GM12878 (cell line): ENCODE measurements at regions of chr12 and their contacts with region 1.

Region 1: DNA sequence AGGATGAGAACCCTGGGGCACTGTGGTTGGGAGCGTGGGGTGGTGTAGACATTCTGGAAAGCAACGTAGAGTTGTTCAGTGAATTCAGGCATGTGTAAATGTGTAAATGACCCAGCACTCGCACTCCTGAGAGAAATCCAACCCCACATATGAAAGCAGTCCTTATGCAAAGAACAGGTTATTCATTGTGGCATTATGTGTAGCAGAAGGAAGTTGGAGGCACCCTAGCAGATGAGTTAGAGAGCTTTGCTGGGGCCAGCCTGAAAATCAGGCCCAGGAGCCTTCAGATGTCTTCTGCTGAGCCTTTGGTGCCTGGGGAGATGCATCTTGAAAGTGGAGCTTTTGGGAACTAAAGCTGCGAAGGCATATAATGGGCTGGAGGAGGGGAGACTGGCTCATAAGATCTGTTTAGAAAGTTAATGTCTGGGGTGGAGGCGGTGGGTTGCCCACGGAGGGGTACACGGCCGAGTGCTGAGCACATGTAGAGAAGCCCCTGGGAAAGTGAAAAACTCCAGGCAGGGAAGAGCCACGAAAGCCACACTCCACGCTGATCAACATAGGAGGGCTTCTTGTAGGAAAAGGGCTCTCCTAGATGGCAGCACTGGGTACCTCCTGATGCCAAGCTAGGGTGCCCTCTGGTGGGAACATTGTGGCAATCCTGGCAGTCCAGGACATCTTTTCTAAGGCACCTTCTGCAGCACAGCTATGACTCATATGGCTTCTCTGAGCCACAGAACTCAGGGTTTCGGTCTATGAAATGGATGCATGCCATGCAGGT is 6.0 kb upstream of the KRT83 start:
- DNase-seq: peak; percentile 76
- ATAC-seq: peak; percentile 99
- H3K4me3 ChIP-seq: no peak overlapping the region
- H3K27ac ChIP-seq: no peak overlapping the region
- H3K4me1 ChIP-seq: peaks cover 7% of the 10 kb centered on the region
- H3K27me3 ChIP-seq: peaks cover 0 to 5% of the 10 kb centered on the region in 2 experiments
- CTCF ChIP-seq: peak; percentile 88 to 100 (median 93)
- EP300 ChIP-seq: no peak
- POLR2A ChIP-seq: no peak
- RAD21 ChIP-seq: peak; percentile 73

Region 2: GRCh38 chr12:52156736-52157565 is 170.3 kb before region 1 on chr12:
- CTCF ChIA-PET with region 1: interaction called, 53 read pairs
- POLR2A ChIA-PET with region 1: no interaction called
- RAD21 ChIA-PET with region 1: interaction called, 7 read pairs
- SMC1A ChIA-PET with region 1: interaction called, 13 read pairs
- in situ Hi-C with region 1: loop called (anchors 10 kb)
- intact Hi-C with region 1: loop called (anchors 1 kb)
- DNase-seq: no peak
- ATAC-seq: peak; percentile 90
- H3K4me3 ChIP-seq: no peak overlapping the region
- H3K27ac ChIP-seq: no peak overlapping the region
- H3K4me1 ChIP-seq: no peaks in the 10 kb centered on the region
- H3K27me3 ChIP-seq: no peaks in the 10 kb centered on the region
- CTCF ChIP-seq: peak; percentile 89 to 97 (median 96); a peak in 5 of 6 replicates
- EP300 ChIP-seq: no peak
- POLR2A ChIP-seq: no peak
- RAD21 ChIP-seq: peak; percentile 95

Region 3: GRCh38 chr12:52213512-52214420 is 113.5 kb before region 1 on chr12:
- CTCF ChIA-PET with region 1: interaction called, 6 read pairs
- POLR2A ChIA-PET with region 1: no interaction called
- RAD21 ChIA-PET with region 1: no interaction called
- SMC1A ChIA-PET with region 1: no interaction called
- in situ Hi-C with region 1: no loop called
- intact Hi-C with region 1: loop called (anchors 10 kb)
- DNase-seq: no peak
- ATAC-seq: peak; percentile 94
- H3K4me3 ChIP-seq: no peak overlapping the region
- H3K27ac ChIP-seq: no peak overlapping the region
- H3K4me1 ChIP-seq: no peaks in the 10 kb centered on the region
- H3K27me3 ChIP-seq: peaks cover 0 to 6% of the 10 kb centered on the region in 2 experiments; a peak in 2 of 4 replicates
- CTCF ChIP-seq: peak; percentile 82 to 94 (median 83)
- EP300 ChIP-seq: no peak
- POLR2A ChIP-seq: no peak
- RAD21 ChIP-seq: peak; percentile 56

Region 4: GRCh38 chr12:52221912-52222457 is 105.3 kb before region 1 on chr12:
- CTCF ChIA-PET with region 1: interaction called, 14 read pairs
- POLR2A ChIA-PET with region 1: no interaction called
- RAD21 ChIA-PET with region 1: interaction called, 8 read pairs
- SMC1A ChIA-PET with region 1: no interaction called
- in situ Hi-C with region 1: no loop called
- intact Hi-C with region 1: loop called (anchors 10 kb)
- DNase-seq: no peak
- ATAC-seq: peak; percentile 92
- H3K4me3 ChIP-seq: no peak overlapping the region
- H3K27ac ChIP-seq: no peak overlapping the region
- H3K4me1 ChIP-seq: peaks cover 6% of the 10 kb centered on the region; the same call in 1 of the 2 replicates
- H3K27me3 ChIP-seq: no peaks in the 10 kb centered on the region; a peak in 1 of 4 replicates
- CTCF ChIP-seq: peak; percentile 48 to 74 (median 67)
- EP300 ChIP-seq: no peak
- POLR2A ChIP-seq: no peak
- RAD21 ChIP-seq: peak; percentile 45

Region 5: DNA sequence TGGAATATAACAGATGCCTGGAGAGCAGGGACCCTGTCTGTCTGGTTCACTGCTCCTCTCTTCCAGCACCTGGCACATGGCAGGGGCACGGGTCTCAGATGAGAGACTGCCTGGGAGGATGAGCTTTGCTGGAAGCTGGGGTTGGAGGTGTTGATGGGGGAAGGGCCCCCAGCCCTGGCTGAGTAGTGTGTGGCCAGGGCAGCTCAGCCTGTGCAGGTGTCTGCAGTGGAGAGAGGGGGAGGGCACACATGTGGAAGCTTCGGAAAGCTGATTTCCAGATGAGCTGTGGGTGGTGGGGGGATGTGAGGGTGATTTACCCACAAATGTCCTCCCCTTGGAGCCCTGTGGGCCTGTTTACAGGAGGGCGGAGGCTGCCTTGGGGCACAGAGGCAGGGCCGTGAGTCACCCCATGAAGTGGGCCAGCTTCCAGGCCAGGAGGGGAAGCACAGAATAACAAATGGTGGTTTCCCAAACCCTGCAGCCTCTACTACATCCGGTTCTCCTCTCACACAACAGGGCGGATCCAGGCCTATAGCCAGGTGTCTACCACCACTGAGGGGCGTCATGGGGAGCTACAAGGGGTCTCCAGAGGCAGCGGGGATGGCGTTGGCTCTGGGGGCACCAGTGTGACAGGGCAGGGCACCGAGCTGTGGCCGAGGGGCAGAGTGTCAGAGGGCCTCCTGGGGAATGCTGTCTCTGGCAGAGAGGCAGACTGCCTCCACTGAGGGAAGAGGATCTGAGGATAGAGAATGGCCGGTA is 83.2 kb before region 1 on chr12:
- CTCF ChIA-PET with region 1: interaction called, 22 read pairs
- POLR2A ChIA-PET with region 1: no interaction called
- RAD21 ChIA-PET with region 1: no interaction called
- SMC1A ChIA-PET with region 1: interaction called, 3 read pairs
- in situ Hi-C with region 1: no loop called
- intact Hi-C with region 1: no loop called
- DNase-seq: peak; percentile 66
- ATAC-seq: peak; percentile 93
- H3K4me3 ChIP-seq: peak overlapping the region; percentile 42; the same call in 1 of the 2 replicates
- H3K27ac ChIP-seq: peak overlapping the region; percentile 86
- H3K4me1 ChIP-seq: peaks cover 22% of the 10 kb centered on the region
- H3K27me3 ChIP-seq: no peaks in the 10 kb centered on the region
- CTCF ChIP-seq: 0 out of 6 replicates have a peak, but pooled peaks of 1 of the 3 experiments have one; percentile 14
- EP300 ChIP-seq: 0 out of 4 replicates have a peak, but pooled peaks of 1 of the 2 experiments have one; percentile 28
- POLR2A ChIP-seq: peak; percentile 77
- RAD21 ChIP-seq: no peak

Region 6: DNA sequence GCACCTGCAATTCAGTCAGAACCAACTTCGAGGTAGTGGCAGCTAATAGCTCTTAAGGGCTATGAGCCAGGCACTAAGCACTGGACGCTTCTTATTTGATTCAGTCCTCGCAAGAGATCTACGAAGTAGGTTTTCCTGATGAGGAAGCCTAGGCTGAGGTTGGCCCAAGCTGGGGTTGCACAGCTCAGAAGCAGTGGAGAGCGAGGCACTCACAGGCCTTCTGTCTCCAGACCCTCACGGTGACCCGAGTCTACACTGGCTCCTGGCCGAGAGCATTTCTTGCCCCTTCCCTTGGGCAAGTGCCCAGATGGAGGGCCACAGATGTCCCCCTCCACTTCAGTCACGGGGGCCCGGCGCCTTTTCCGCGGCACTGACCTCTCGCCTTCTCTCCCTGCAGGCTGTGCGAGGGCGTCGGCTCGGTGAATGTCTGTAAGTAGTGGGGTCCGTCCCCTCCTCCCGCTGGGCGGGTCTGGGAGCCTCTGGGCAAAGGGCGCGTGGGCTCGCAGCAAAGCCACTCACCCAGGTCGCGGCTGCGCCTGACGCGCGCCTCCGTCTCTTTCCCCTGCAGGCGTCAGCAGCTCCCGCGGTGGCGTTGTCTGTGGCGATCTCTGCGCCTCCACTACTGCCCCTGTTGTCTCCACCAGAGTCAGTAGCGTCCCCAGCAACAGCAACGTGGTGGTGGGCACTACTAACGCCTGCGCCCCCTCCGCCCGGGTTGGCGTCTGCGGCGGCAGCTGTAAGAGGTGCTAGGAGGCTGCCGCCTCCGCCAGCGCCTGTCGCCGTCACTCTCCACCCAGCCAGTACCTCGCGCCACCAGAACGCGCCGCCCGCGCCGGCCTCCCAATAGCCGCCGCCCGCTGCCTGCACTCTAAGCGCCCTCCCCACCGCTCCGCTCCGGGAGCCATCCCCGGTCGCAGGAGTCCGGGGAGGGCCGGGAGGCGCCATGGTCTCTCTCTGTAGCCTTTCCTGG is 19.1 kb before region 1 on chr12:
- CTCF ChIA-PET with region 1: interaction called, 17 read pairs
- POLR2A ChIA-PET with region 1: interaction called, 3 read pairs
- RAD21 ChIA-PET with region 1: no interaction called
- SMC1A ChIA-PET with region 1: interaction called, 7 read pairs
- in situ Hi-C with region 1: no loop called
- intact Hi-C with region 1: no loop called
- DNase-seq: no peak
- ATAC-seq: peak; percentile 70
- H3K4me3 ChIP-seq: no peak overlapping the region
- H3K27ac ChIP-seq: no peak overlapping the region
- H3K4me1 ChIP-seq: peaks cover 9% of the 10 kb centered on the region
- H3K27me3 ChIP-seq: peaks cover 13 to 18% of the 10 kb centered on the region in 2 experiments; a peak in 3 of 4 replicates
- CTCF ChIP-seq: no peak
- EP300 ChIP-seq: no peak
- POLR2A ChIP-seq: no peak
- RAD21 ChIP-seq: no peak

Region 7: DNA sequence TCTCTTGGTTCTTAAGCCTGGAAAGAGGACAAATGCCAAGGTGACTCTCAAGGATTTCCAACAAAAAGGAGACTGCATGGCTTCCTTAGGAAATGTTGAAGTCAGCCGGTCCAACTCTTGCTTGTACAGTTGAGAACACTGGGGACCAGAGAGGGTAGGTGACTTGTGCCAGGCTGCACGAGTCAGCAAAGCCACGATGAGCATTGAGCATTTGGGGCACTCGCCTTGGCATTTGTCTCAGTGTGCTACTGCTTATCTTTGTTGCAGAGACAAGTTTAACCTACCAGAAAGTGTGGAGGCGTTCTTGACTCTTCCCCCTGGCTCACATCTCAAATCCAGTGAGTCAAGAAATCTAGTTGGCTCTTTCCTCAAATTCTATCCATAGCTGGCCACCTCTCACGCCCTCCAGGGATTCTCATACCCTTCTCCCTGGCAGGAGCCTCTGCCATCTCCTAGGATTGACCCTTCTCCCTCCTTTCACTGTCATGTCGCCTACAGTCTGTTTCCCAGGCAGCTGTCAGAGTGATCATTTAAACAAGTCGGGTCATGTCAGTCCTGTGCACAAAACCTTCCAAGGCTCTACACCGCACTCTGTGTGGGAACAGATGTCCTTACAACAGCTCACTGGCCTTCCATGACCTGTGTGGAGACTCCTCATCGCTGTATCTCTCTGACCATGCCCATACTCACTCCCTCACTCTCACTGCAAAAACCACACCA is 11.2 kb after region 1 on chr12:
- CTCF ChIA-PET with region 1: interaction called, 12 read pairs
- POLR2A ChIA-PET with region 1: no interaction called
- RAD21 ChIA-PET with region 1: no interaction called
- SMC1A ChIA-PET with region 1: interaction called, 4 read pairs
- in situ Hi-C with region 1: no loop called
- intact Hi-C with region 1: no loop called
- DNase-seq: no peak
- ATAC-seq: no peak
- H3K4me3 ChIP-seq: no peak overlapping the region
- H3K27ac ChIP-seq: no peak overlapping the region
- H3K4me1 ChIP-seq: no peaks in the 10 kb centered on the region
- H3K27me3 ChIP-seq: peaks cover 0 to 2% of the 10 kb centered on the region in 2 experiments; a peak in 2 of 4 replicates
- CTCF ChIP-seq: no peak
- EP300 ChIP-seq: no peak
- POLR2A ChIP-seq: no peak
- RAD21 ChIP-seq: no peak